ENCODE measurements at regions of chr6 and their contacts with region 1.

Region 1: GRCh38 chr6:80214436-80215022 is 108.1 kb downstream of the BCKDHB start:
- DNase-seq: peak; percentile 24
- CTCF ChIP-seq: peak; percentile 62

Region 2: GRCh38 chr6:80106418-80107235 is 107.9 kb before region 1 on chr6 and contains the start of gene BCKDHB:
- CTCF ChIA-PET with region 1: no interaction called
- POLR2A ChIA-PET with region 1: no interaction called
- DNase-seq: peak; percentile 98
- CTCF ChIP-seq: no peak

Region 3: GRCh38 chr6:80163658-80164187 is 50.8 kb before region 1 on chr6:
- CTCF ChIA-PET with region 1: no interaction called
- POLR2A ChIA-PET with region 1: no interaction called
- DNase-seq: peak; percentile 17
- CTCF ChIP-seq: no peak

Region 4: GRCh38 chr6:80186082-80186481 is 28.4 kb before region 1 on chr6:
- CTCF ChIA-PET with region 1: interaction called, 11 read pairs
- POLR2A ChIA-PET with region 1: no interaction called
- DNase-seq: no peak
- CTCF ChIP-seq: no peak

Region 5: GRCh38 chr6:80234401-80234800 is 19.9 kb after region 1 on chr6:
- CTCF ChIA-PET with region 1: interaction called, 25 read pairs
- POLR2A ChIA-PET with region 1: no interaction called
- DNase-seq: no peak
- CTCF ChIP-seq: no peak

Region 6: DNA sequence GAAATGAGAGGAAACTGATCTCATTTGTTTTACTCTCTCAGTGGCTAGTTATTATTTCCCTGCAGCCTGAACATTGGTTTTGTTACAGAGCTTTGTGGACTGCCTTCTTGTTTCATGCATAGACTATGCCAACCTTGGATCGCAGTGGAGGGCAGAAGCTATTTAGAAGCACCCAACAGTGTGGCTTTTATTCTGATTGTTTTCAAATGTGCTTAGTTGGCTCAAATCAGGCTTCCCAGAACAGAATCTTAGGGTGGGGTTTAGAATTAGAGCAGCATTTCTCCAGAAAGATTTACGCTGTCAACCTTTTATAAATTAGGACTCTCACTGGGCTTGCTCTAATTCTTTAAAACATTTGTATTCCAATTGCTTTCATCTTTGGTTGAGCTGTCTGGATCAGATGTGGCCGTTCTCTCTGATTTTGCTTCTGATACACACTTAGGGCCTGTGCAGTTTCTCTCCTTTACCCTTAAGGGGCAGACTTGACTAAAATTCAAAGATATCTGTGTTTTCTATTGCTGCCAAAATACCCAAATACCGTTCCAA is 102.2 kb after region 1 on chr6:
- CTCF ChIA-PET with region 1: no interaction called
- POLR2A ChIA-PET with region 1: no interaction called
- DNase-seq: no peak
- CTCF ChIP-seq: no peak

Region 7: GRCh38 chr6:80517525-80517924 is 303.0 kb after region 1 on chr6:
- CTCF ChIA-PET with region 1: no interaction called
- POLR2A ChIA-PET with region 1: no interaction called
- DNase-seq: no peak
- CTCF ChIP-seq: no peak

Measured in GM10248 (cell line).